ENCODE measurements at regions of chr16 and their contacts with region 1.

Region 1: GRCh38 chr16:53518550-53519416 is 15.8 kb upstream of the AKTIP start:
- DNase-seq: peak; percentile 95
- H3K4me3 Mint-ChIP-seq: peak overlapping the region; percentile 73
- H3K27ac Mint-ChIP-seq: peak overlapping the region; percentile 83
- H3K4me1 Mint-ChIP-seq: peaks cover 54% of the 10 kb centered on the region
- H3K27me3 Mint-ChIP-seq: no peaks in the 10 kb centered on the region

Region 2: GRCh38 chr16:53457670-53458069 is 61.1 kb before region 1 on chr16:
- intact Hi-C with region 1: loop called (anchors 1 kb)
- DNase-seq: peak; percentile 95
- H3K4me3 Mint-ChIP-seq: peak overlapping the region; percentile 79
- H3K27ac Mint-ChIP-seq: peak overlapping the region; percentile 88
- H3K4me1 Mint-ChIP-seq: peaks cover 73% of the 10 kb centered on the region
- H3K27me3 Mint-ChIP-seq: no peaks in the 10 kb centered on the region

Region 3: GRCh38 chr16:53549970-53550690 is 31.3 kb after region 1 on chr16:
- intact Hi-C with region 1: no loop called
- DNase-seq: peak; percentile 85
- H3K4me3 Mint-ChIP-seq: no peak overlapping the region
- H3K27ac Mint-ChIP-seq: no peak overlapping the region
- H3K4me1 Mint-ChIP-seq: peaks cover 26% of the 10 kb centered on the region
- H3K27me3 Mint-ChIP-seq: peaks cover 33% of the 10 kb centered on the region

Region 4: DNA sequence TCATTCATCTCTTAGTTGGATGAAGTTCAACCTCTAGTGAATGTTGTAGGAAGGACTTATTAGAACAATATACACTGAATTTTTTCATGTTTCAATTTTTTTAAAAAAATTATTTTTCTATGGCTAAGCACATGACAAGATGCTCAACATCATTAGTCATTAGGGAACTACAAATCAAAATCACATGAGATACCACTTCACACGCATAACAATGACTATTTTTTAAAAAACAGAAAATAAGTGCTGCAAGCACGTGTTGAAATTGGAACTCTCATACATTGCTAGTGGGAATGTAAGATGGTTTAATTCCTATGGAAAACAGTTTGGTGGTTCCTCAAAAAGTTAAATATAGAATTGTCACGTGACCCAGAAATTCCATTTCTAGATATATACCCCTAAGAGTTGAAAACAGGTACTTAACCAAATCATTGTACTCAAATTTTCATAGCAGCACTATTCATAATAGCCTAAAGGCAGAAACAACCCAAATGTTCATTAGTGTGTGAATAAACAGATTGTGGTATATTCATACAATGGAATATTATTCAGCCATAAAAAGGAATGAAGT is 69.4 kb after region 1 on chr16:
- intact Hi-C with region 1: no loop called
- DNase-seq: no peak
- H3K4me3 Mint-ChIP-seq: no peak overlapping the region
- H3K27ac Mint-ChIP-seq: no peak overlapping the region
- H3K4me1 Mint-ChIP-seq: no peaks in the 10 kb centered on the region
- H3K27me3 Mint-ChIP-seq: peaks cover 10% of the 10 kb centered on the region

Region 5: GRCh38 chr16:53614346-53614745 is 95.6 kb after region 1 on chr16:
- intact Hi-C with region 1: no loop called
- DNase-seq: no peak
- H3K4me3 Mint-ChIP-seq: no peak overlapping the region
- H3K27ac Mint-ChIP-seq: no peak overlapping the region
- H3K4me1 Mint-ChIP-seq: no peaks in the 10 kb centered on the region
- H3K27me3 Mint-ChIP-seq: no peaks in the 10 kb centered on the region

Measured in activated CD4-positive, alpha-beta T cell treated with anti-CD3 and anti-CD28 coated beads, Interleukin-2, amount 10 ng/mL, durations not matched to agents 24 days and 14 days (primary cell).